ENCODE measurements at regions of chr17 and their contacts with region 1.

Region 1: DNA sequence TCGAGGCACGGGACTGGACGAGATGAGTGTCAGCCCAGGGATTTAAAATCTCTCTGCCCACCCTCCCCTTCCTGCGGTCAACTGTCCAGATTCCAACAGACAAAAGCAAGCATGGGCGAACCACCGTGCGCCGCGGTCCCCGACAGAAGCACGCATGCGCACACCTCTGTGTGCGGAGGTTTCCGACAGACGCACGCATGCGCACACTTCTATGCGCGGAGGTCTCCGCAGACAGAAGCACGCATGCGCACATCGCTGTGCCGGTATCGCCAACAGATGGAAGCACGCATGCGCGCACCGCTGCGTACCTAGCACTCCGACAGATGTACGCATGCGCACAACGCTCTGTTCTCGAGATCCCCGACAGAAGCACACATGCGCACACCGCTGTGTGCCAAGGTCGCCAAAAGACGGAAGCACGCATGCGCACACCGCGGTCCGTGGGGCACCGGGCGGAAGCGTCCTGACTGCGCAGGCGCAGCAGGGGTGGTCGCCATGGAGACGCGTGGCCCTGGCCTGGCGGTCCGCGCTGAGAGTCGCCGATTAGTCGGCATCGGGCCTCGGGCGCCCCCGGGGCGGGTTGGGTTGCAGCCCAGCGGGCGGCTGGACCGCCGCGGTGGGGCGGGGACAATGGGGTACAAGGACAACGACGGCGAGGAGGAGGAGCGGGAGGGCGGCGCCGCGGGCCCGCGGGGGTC is 57.4 kb upstream of the RPH3AL start:
- DNase-seq: peak; percentile 100
- ATAC-seq: peak; percentile 73
- H3K4me3 Mint-ChIP-seq: peak overlapping the region; percentile 75
- H3K27ac Mint-ChIP-seq: peak overlapping the region; percentile 73
- H3K4me1 Mint-ChIP-seq: peaks cover 50% of the 10 kb centered on the region
- H3K27me3 Mint-ChIP-seq: no peaks in the 10 kb centered on the region
- CTCF ChIP-seq: no peak

Region 2: GRCh38 chr17:350706-351448 is 59.1 kb before region 1 on chr17:
- CTCF ChIA-PET with region 1: no interaction called
- POLR2A ChIA-PET with region 1: no interaction called
- intact Hi-C with region 1: no loop called
- DNase-seq: no peak
- ATAC-seq: no peak
- H3K4me3 Mint-ChIP-seq: no peak overlapping the region
- H3K27ac Mint-ChIP-seq: no peak overlapping the region
- H3K4me1 Mint-ChIP-seq: no peaks in the 10 kb centered on the region
- H3K27me3 Mint-ChIP-seq: no peaks in the 10 kb centered on the region
- CTCF ChIP-seq: no peak

Region 3: GRCh38 chr17:489758-490329 is 79.8 kb after region 1 on chr17:
- CTCF ChIA-PET with region 1: interaction called, 42 read pairs
- POLR2A ChIA-PET with region 1: interaction called, 6 read pairs
- intact Hi-C with region 1: no loop called
- DNase-seq: peak; percentile 88
- ATAC-seq: peak; percentile 71
- H3K4me3 Mint-ChIP-seq: peak overlapping the region; percentile 80
- H3K27ac Mint-ChIP-seq: peak overlapping the region; percentile 88
- H3K4me1 Mint-ChIP-seq: peaks cover 10% of the 10 kb centered on the region
- H3K27me3 Mint-ChIP-seq: peaks cover 6% of the 10 kb centered on the region
- CTCF ChIP-seq: no peak

Region 4: DNA sequence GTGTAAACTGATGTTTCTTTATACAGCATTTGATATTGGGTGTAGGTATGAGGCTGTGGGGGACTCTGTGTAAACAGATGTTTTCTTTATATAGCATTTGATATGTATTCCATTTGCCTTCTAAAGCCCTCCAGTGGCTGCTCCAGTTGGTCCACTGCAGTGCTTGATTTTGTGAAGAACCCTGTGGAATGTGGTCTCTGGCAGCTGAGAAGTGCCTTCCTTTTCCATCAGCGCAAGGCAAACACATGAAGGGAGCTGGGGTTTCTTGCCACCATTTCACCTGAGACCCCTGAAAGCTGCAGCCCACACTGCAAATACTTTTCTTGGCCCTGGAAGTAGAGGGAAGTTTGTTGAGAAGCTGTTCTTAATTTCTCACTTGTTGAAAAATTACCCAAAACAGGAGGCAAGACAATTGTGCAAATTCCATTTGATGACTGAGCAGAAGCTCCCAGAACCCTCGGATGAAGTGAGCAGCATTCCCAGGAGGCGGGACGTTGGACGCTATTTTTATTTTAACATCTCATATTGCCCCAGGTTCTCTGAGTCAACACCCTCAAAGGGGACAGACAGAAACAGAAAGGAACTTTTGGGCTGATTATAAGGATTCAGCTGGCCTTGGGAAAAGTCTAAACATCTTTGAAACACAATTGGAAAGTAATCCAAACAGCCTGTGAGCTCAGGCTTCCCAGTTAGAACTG is 101.2 kb after region 1 on chr17:
- CTCF ChIA-PET with region 1: interaction called, 11 read pairs
- POLR2A ChIA-PET with region 1: no interaction called
- intact Hi-C with region 1: no loop called
- DNase-seq: no peak
- ATAC-seq: no peak
- H3K4me3 Mint-ChIP-seq: no peak overlapping the region
- H3K27ac Mint-ChIP-seq: no peak overlapping the region
- H3K4me1 Mint-ChIP-seq: peaks cover 3% of the 10 kb centered on the region
- H3K27me3 Mint-ChIP-seq: no peaks in the 10 kb centered on the region
- CTCF ChIP-seq: no peak

Region 5: DNA sequence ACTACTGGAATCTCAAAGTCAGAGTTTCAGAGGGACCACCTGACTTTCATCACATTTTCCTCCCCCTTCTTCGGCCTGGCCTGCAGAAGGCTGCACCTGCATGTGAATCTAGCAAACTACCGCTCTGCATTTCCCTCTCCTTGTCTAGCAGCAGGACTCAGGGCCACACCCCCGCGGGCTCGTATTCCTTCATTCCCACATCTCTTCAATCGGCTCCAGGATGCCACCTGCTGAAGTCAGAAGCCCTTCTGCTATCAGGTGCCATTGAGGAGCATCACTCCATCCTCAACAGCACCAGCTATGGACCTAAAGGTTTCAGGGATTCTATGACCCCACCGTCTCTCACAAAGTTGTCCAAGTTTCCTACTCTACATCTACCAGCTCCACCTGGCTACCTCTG is 135.2 kb after region 1 on chr17:
- CTCF ChIA-PET with region 1: interaction called, 20 read pairs
- POLR2A ChIA-PET with region 1: no interaction called
- intact Hi-C with region 1: no loop called
- DNase-seq: no peak
- ATAC-seq: no peak
- H3K4me3 Mint-ChIP-seq: no peak overlapping the region
- H3K27ac Mint-ChIP-seq: no peak overlapping the region
- H3K4me1 Mint-ChIP-seq: peaks cover 7% of the 10 kb centered on the region
- H3K27me3 Mint-ChIP-seq: no peaks in the 10 kb centered on the region
- CTCF ChIP-seq: no peak

Region 6: DNA sequence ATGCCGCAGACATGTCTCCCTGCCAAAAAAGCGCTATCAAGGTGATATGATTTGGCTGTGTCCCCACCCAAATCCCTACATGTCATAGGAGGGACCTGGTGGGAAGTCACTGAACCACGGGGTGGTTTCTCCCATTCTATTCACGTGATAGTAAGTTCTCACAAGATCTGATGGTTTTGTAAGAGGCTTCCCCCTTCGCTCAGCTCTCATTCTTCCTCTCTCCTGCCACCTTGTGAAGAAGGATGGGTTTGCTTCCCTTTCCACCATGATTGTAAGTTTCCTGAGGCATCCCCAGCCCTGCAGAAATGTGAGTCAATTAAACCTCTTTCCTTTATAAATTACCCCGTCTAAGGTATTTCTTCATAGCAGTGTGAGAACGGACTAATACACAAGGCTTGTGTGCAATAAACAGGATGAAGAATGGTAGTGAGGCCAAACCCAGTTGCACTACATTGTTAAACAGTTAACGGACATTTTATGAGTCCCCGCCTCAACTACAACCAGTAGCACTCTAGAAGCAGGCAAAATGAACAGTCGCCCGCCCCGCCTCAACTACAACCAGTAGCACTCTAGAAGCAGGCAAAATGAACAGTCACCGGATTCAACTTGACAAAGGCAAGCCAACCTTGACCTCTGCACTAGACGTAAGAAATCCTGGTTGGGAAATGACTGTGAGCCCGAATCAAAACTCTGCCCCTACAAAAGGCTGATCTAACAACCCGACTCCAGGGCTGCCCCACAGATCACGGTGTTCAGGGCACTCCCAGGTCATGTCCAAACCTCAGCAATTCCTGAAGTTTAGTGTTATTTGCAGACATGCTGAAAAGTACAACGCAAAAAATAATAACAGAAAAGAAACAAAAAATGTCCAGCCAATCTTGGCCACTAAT is 278.3 kb after region 1 on chr17:
- CTCF ChIA-PET with region 1: interaction called, 21 read pairs
- POLR2A ChIA-PET with region 1: interaction called, 3 read pairs
- intact Hi-C with region 1: no loop called
- DNase-seq: no peak
- ATAC-seq: no peak
- H3K4me3 Mint-ChIP-seq: no peak overlapping the region
- H3K27ac Mint-ChIP-seq: no peak overlapping the region
- H3K4me1 Mint-ChIP-seq: no peaks in the 10 kb centered on the region
- H3K27me3 Mint-ChIP-seq: no peaks in the 10 kb centered on the region
- CTCF ChIP-seq: no peak

Region 7: DNA sequence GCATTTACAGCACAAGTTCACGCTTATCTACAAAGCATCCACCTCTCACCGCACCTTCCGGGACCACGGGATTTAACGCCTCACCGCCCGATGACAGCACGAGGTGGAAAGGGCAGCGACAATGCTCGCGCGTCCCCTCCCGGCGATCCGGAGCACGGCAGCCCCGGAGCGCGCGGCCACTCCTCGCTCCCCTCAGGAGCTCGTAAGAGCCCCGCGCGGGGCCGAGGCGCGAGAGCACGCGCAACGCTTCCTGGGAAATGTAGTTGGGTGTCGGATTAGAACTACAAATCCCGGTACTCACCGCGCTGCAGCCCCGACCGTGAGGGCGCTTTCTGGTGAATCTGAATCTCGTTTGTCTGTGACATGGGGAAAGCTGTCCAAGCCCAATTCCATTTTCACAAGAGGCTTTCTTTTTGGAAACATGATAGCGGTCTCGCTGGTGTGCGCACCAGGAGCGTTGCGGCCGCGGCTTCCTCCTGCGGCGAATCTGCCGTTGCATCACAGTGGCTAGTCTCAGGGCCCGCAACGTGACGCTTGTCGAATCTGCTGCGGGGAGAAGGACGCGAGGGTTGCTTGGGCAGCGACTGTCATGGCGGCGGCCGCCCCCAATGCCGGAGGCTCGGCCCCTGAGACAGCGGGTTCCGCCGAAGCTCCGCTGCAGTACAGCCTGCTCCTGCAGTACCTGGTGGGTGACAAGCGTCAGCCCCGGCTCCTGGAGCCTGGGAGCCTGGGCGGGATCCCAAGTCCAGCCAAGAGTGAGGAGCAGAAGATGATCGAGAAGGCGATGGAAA is 586.8 kb after region 1 on chr17 and contains the start of gene TIMM22:
- CTCF ChIA-PET with region 1: interaction called, 4 read pairs
- POLR2A ChIA-PET with region 1: no interaction called
- intact Hi-C with region 1: loop called (anchors 5 kb)
- DNase-seq: peak; percentile 95
- ATAC-seq: peak; percentile 96
- H3K4me3 Mint-ChIP-seq: peak within 1 kb of the TSS; percentile 87
- H3K27ac Mint-ChIP-seq: peak within 1 kb of the TSS; percentile 99
- H3K4me1 Mint-ChIP-seq: peaks cover 24% of the 10 kb centered on the region
- H3K27me3 Mint-ChIP-seq: no peaks in the 10 kb centered on the region
- CTCF ChIP-seq: peak; percentile 94
- total RNA-seq, gene TIMM22: 8.8 to 10.2 TPM

Measured in activated CD8-positive, alpha-beta T cell treated with anti-CD3 and anti-CD28 coated beads for 36 hours (primary cell).